Esophagus muscularis mucosa (tissue), 4 donors: ENCODE measurements at regions of chr1 and their contacts with region 1.

Region 1: DNA sequence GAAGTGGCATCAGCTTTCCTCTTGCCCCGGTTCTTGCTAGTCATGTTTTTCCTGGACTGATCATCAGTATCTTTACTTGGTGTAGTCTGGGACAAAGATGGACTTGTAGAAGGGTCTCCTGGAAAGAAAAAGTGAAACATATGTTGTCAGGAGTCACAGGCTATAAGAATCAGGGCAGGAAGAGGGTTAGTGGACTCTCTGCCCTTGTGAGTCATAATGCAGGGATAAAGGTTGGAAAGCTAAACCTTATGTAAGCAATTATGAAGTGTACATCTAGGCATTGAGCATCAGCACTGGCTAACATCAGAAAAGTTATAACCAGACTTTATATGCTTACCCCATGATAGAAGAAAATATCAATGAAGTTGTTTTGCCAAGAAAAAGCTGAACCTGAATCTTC is 51.2 kb downstream of the XKR8 start:
- DNase-seq: no peak
- H3K4me3 ChIP-seq: no peak overlapping the region
- H3K27ac ChIP-seq: no peak overlapping the region
- H3K4me1 ChIP-seq: no peaks in the 10 kb centered on the region
- H3K27me3 ChIP-seq: no peaks in the 10 kb centered on the region
- CTCF ChIP-seq: no peak
- EP300 ChIP-seq: no peak
- POLR2A ChIP-seq: no peak

Region 2: GRCh38 chr1:28058971-28059878 is 48.3 kb after region 1 on chr1:
- intact Hi-C with region 1: loop called (anchors 1 kb)
- DNase-seq: no peak
- H3K4me3 ChIP-seq: no peak overlapping the region
- H3K27ac ChIP-seq: no peak overlapping the region
- H3K4me1 ChIP-seq: peaks cover 0 to 10% (median 0%) of the 10 kb centered on the region in 4 donors
- H3K27me3 ChIP-seq: no peaks in the 10 kb centered on the region
- CTCF ChIP-seq: no peak
- EP300 ChIP-seq: no peak
- POLR2A ChIP-seq: no peak

Region 3: GRCh38 chr1:28078680-28079626 is 68.0 kb after region 1 on chr1:
- intact Hi-C with region 1: no loop called
- DNase-seq: no peak
- H3K4me3 ChIP-seq: no peak overlapping the region
- H3K27ac ChIP-seq: no peak overlapping the region
- H3K4me1 ChIP-seq: peaks cover 21 to 33% (median 26%) of the 10 kb centered on the region in 4 donors
- H3K27me3 ChIP-seq: no peaks in the 10 kb centered on the region
- CTCF ChIP-seq: no peak
- EP300 ChIP-seq: no peak
- POLR2A ChIP-seq: no peak